ENCODE measurements at regions of chr16 and their contacts with region 1.

Region 1: DNA sequence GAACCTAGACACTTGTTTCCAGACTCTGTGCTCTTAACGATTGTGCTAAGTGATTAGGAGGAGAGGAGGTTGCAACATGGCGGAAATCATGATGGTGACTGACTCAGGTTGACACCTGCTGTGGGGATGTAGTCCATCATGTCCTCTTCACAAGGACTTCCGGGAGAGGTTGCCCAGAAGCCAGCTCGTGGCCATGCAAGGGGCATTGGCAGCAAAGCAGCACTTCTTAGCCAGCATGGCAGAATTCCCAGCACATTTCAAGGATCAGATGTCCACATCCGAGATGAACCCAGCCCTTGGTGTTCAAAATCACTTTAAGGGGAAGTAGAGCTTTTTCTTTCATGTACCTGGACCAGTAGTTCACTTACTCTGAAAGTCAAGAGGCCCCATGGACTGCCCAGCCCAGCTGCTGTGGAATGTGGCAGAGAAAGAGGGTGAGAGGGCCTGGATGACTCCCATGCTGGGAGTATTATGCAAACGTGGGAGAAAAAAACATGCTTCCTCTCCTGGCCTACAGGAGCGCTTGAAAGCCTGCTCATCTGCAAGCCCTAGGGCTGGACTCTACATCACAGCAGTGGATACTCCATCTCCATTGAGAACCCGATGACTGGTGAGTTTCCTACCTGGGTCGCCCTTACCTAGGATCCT is 65.5 kb downstream of the IRX6 start:
- DNase-seq: peak; percentile 40 to 84
- ATAC-seq: peak; percentile 88 to 90
- H3K4me3 ChIP-seq: peak overlapping the region in 1 of 4 donors; percentile 20
- H3K27ac ChIP-seq: peak overlapping the region; percentile 66 to 79 (median 72)
- H3K4me1 ChIP-seq: no peaks in the 10 kb centered on the region
- H3K27me3 ChIP-seq: no peaks in the 10 kb centered on the region
- CTCF ChIP-seq: no peak
- POLR2A ChIP-seq: peak in 1 of 2 donors; percentile 5

Region 2: GRCh38 chr16:55271945-55272513 is 117.5 kb before region 1 on chr16:
- in situ Hi-C with region 1: no loop called
- intact Hi-C with region 1: loop called (anchors 5 kb)
- DNase-seq: peak; percentile 25 to 65
- ATAC-seq: peak; percentile 93 to 96
- H3K4me3 ChIP-seq: no peak overlapping the region
- H3K27ac ChIP-seq: peak overlapping the region in 3 of 4 donors; percentile 18 to 70 (median 69)
- H3K4me1 ChIP-seq: peaks cover 7 to 12% of the 10 kb centered on the region in 2 donors
- H3K27me3 ChIP-seq: no peaks in the 10 kb centered on the region
- CTCF ChIP-seq: no peak
- POLR2A ChIP-seq: peak; percentile 24 to 62

Region 3: GRCh38 chr16:55433030-55433429 is 43.5 kb after region 1 on chr16:
- in situ Hi-C with region 1: no loop called
- intact Hi-C with region 1: loop called (anchors 5 kb)
- DNase-seq: no peak
- ATAC-seq: no peak
- H3K4me3 ChIP-seq: no peak overlapping the region
- H3K27ac ChIP-seq: peak overlapping the region in 2 of 4 donors; percentile 47 to 62
- H3K4me1 ChIP-seq: peaks cover 4% of the 10 kb centered on the region in 2 donors
- H3K27me3 ChIP-seq: no peaks in the 10 kb centered on the region
- CTCF ChIP-seq: no peak
- POLR2A ChIP-seq: no peak

Region 4: DNA sequence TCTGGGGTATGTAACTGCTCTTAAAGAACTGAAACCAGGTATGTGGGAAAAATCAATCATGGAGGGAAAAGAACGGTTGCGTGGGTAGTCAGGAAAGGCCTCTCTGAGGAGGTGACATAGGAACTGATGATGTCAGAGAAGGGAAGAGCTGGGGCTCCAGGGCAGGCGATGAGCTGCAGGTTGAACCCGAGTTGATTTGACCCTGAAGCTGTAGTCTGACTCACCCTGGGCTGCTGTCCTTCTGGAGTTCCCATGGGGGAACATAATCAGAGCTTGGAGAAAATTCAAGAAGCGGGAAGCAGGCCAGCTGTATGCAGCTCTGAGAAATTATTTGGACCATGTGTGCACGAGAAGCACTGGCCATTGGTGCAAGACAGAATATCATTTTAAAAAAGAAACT is 282.9 kb after region 1 on chr16:
- in situ Hi-C with region 1: no loop called
- intact Hi-C with region 1: loop called (anchors 10 kb)
- DNase-seq: peak; percentile 28 to 43
- ATAC-seq: peak; percentile 40 to 47
- H3K4me3 ChIP-seq: no peak overlapping the region
- H3K27ac ChIP-seq: no peak overlapping the region
- H3K4me1 ChIP-seq: peaks cover 4 to 18% of the 10 kb centered on the region in 2 donors
- H3K27me3 ChIP-seq: no peaks in the 10 kb centered on the region
- CTCF ChIP-seq: no peak
- POLR2A ChIP-seq: no peak